Right ventricle myocardium inferior (tissue), 1 donor: ENCODE measurements at regions of chr21 and their contacts with region 1.

Region 1: GRCh38 chr21:16211339-16212303 is 481.8 kb downstream of the USP25 start:
- DNase-seq: no peak
- ATAC-seq: peak; percentile 51

Region 2: DNA sequence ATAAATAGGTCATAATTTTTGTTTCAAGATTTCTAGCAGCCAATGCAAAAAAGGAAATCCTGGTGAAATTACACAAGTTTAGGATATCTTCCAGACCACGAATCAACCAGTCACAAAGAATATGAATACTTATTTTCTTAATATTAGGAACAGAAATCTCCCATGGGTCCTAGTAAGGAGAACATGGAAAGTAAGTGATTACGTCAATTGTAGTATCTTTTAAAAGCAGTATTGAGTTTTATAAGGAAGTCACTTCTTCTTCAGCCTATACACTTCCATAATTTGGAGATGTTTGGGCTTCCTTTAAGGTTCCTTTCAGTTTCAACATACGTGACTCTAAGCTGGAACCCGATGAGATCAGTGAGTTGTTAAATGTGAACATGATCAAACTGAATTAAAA is 52.7 kb after region 1 on chr21:
- intact Hi-C with region 1: loop called (anchors 10 kb)
- DNase-seq: no peak
- ATAC-seq: peak; percentile 72